Stomach (tissue), 19 donors: ENCODE measurements at regions of chr11 and their contacts with region 1.

Region 1: DNA sequence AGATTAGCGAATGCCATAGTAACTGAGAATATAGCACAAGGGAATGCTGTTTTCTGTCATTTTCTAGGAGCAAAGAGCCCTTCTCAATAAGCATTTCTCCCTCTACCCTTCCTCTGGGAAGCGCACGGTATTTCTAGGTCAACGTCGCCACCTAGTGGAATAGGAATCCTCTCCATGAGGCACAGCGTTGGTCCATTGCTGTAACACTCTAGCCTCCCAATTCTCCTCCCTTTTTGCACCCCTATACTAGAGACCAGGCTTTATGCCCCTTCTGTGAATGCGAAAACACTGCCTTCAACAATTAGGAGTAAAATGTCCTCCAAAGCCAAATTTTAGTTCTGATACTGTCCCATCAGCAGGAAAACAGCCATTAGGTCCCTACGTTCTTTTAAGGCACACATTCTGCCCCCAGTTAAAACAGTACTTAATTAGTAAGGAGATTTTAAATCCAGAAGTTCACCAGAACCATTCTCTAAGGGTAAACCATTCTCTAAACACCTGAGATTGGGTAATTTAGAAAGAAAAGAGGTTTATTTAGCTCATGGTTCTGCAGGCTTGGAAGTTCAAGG is 12.8 kb upstream of the HYLS1 start:
- DNase-seq: peak; percentile 48 to 88
- H3K4me3 ChIP-seq: no peak overlapping the region
- H3K27ac ChIP-seq: no peak overlapping the region
- H3K4me1 ChIP-seq: peaks cover 0 to 6% (median 0%) of the 10 kb centered on the region in 4 donors
- H3K27me3 ChIP-seq: no peaks in the 10 kb centered on the region
- CTCF ChIP-seq: peak in 5 of 7 experiments; percentile 55 to 79 (median 66)
- EP300 ChIP-seq: no peak
- POLR2A ChIP-seq: no peak

Region 2: DNA sequence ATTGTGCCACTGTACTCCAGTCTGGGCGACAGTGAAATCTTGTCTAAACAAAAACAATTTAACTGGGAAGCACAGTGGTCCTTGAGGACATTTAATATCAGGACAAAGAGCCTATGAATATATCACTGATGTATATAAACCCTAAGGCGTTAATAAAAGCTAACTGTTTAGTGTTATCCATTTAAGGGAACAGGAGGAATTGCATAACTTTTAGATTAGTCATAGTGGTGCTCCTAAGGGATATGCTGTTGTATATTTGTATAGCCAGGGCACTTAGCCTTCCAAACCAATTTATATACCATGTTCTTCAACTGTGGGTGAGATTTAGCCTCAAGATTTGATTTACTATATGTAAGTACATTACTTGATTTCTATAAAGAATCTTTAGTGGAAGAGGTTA is 252.7 kb before region 1 on chr11:
- intact Hi-C with region 1: loop called (anchors 5 kb)
- DNase-seq: no peak
- H3K4me3 ChIP-seq: no peak overlapping the region
- H3K27ac ChIP-seq: no peak overlapping the region
- H3K4me1 ChIP-seq: peaks cover 14 to 32% (median 23%) of the 10 kb centered on the region in 4 donors
- H3K27me3 ChIP-seq: no peaks in the 10 kb centered on the region
- CTCF ChIP-seq: no peak
- EP300 ChIP-seq: no peak
- POLR2A ChIP-seq: no peak